ENCODE measurements at regions of chr3 and their contacts with region 1.

Region 1: DNA sequence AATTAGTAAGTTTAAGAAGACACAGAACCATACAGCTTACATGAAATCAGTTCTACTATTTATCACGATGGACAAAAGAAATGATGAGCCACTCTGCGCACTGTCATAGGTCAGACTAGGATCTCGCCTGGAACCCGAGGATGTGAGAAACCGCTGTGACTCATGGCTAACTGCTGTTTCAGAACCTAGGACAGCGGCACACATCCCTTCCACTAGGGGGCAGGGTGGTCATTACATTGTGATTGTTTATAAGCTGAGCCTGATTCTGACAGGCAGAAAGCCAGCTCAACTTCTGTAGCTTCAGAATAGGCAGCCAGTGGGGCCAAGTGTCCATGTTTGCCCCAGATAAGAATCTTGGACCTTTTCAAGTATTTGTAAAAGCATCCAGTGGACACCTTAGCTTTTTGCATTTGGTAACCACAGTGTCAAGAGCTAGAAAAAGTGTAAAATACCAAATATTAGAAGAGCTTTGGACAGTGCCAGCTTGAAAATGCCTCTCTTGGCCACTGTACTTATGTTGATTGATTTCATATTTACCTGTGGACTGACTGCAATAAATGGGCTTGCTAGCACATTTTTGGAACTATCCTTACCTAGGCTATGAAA is 115.8 kb downstream of the KBTBD8 start:
- DNase-seq: peak; percentile 86
- H3K4me3 Mint-ChIP-seq: no peak overlapping the region
- H3K27ac Mint-ChIP-seq: no peak overlapping the region
- H3K4me1 Mint-ChIP-seq: no peaks in the 10 kb centered on the region
- H3K27me3 Mint-ChIP-seq: peaks cover 4% of the 10 kb centered on the region

Region 2: DNA sequence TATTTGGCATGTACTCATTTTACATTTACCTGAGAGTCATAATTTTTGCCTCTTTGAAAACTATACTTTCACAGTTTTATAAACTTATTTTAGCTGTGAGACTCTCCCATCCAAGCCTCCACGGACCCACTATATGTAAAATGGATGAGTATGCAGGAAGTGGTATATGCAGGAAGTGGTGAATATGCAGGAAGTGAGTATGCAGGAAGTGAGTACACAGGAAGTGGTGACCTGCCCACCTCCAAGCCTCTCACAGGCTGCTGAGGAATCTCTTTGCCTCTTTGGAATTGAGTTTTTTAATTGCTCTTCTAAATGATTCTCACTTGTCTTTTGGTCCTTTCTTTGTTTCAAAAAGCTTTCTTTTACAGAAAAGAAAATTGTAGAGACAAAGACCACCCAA is 30.6 kb before region 1 on chr3:
- CTCF ChIA-PET with region 1: interaction called, 13 read pairs
- POLR2A ChIA-PET with region 1: interaction called, 4 read pairs
- DNase-seq: peak; percentile 70
- H3K4me3 Mint-ChIP-seq: no peak overlapping the region
- H3K27ac Mint-ChIP-seq: peak overlapping the region; percentile 81
- H3K4me1 Mint-ChIP-seq: peaks cover 23% of the 10 kb centered on the region
- H3K27me3 Mint-ChIP-seq: peaks cover 5% of the 10 kb centered on the region

Region 3: DNA sequence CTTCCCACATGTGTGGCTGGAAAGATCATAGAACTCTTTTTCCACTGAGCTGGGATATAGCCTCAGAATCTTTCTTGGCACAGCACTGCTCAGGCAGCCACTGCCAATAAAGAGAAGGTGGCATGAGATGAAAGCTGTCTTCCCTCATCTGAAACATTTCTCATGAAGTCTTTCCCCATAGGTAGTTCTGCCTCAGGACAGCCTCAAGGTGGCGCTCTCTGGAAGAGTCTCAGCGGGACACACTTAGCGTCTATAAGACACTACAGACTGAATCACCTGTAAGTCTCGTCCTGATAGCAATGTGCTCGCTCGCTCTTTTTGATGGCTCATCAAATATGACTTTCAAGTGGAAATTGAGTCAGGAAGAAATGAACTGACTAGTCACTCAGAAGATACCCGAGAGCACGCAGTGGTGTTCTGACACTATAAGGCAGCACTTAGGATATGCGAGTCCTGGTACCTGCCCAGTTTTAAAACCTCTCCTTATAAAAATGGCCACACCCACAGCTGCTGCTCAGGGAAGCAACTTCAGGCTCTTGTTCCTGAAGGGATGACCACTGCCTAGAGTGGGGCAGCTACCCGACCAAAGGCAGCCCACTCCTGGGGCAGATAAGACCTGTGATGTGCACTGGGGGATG is 271.0 kb after region 1 on chr3:
- CTCF ChIA-PET with region 1: interaction called, 11 read pairs
- POLR2A ChIA-PET with region 1: no interaction called
- DNase-seq: peak; percentile 41
- H3K4me3 Mint-ChIP-seq: no peak overlapping the region
- H3K27ac Mint-ChIP-seq: no peak overlapping the region
- H3K4me1 Mint-ChIP-seq: peaks cover 7% of the 10 kb centered on the region
- H3K27me3 Mint-ChIP-seq: no peaks in the 10 kb centered on the region

Region 4: GRCh38 chr3:67790043-67790442 is 676.1 kb after region 1 on chr3:
- CTCF ChIA-PET with region 1: interaction called, 28 read pairs
- POLR2A ChIA-PET with region 1: no interaction called
- DNase-seq: peak; percentile 61
- H3K4me3 Mint-ChIP-seq: no peak overlapping the region
- H3K27ac Mint-ChIP-seq: no peak overlapping the region
- H3K4me1 Mint-ChIP-seq: peaks cover 2% of the 10 kb centered on the region
- H3K27me3 Mint-ChIP-seq: peaks cover 6% of the 10 kb centered on the region

Region 5: GRCh38 chr3:68876112-68876713 is 1762.3 kb after region 1 on chr3:
- CTCF ChIA-PET with region 1: interaction called, 16 read pairs
- POLR2A ChIA-PET with region 1: no interaction called
- DNase-seq: peak; percentile 19
- H3K4me3 Mint-ChIP-seq: no peak overlapping the region
- H3K27ac Mint-ChIP-seq: no peak overlapping the region
- H3K4me1 Mint-ChIP-seq: no peaks in the 10 kb centered on the region
- H3K27me3 Mint-ChIP-seq: peaks cover 31% of the 10 kb centered on the region

Region 6: DNA sequence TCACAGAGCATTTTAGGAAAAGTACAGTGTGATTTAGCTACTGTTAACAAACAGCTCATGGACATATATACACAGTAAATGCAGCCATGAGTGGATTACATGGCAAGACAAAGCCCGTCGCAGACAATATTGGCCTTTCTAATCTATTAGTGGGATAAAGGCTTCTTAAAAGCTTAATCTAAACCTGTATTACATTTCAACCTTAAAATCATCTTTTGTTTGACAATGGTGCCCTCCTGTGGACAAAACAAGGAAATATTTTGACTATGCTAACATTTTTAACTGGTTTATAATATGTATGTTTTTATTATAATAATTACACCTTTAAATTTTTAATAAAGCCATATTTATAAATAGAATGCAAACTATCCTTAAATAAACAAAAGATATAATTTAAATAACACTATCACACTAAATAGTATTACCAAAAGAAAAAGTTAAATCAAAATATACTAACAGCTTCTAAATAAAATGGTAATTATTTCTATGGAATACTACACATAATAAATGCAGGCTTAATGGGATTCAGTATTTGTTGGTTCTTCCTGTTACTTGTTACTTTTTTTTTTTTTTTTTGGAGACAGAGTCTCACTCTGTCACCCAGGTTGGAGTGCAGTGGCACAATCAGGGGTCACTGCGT is 1779.8 kb after region 1 on chr3:
- CTCF ChIA-PET with region 1: interaction called, 13 read pairs
- POLR2A ChIA-PET with region 1: no interaction called
- DNase-seq: no peak
- H3K4me3 Mint-ChIP-seq: no peak overlapping the region
- H3K27ac Mint-ChIP-seq: no peak overlapping the region
- H3K4me1 Mint-ChIP-seq: peaks cover 3% of the 10 kb centered on the region
- H3K27me3 Mint-ChIP-seq: peaks cover 23% of the 10 kb centered on the region

Measured in activated CD4-positive, alpha-beta memory T cell treated with anti-CD3 and anti-CD28 coated beads, Interleukin-2, amount 10 ng/mL, durations not matched to agents 7 days and 5 days (primary cell).